IMR-90 (cell line): ENCODE measurements at regions of chr1 and their contacts with region 1.

Region 1: GRCh38 chr1:212455803-212456528 is 23.2 kb downstream of the NENF start:
- DNase-seq: peak; percentile 82
- ATAC-seq: peak; percentile 90
- H3K4me3 ChIP-seq: no peak overlapping the region
- H3K27ac ChIP-seq: no peak overlapping the region
- H3K4me1 ChIP-seq: peaks cover 4% of the 10 kb centered on the region; the same call in 1 of the 2 replicates
- H3K27me3 ChIP-seq: no peaks in the 10 kb centered on the region
- CTCF ChIP-seq: peak; percentile 96
- POLR2A ChIP-seq: no peak
- RAD21 ChIP-seq: peak; percentile 98

Region 2: GRCh38 chr1:211680752-211681327 is 775.1 kb before region 1 on chr1:
- CTCF ChIA-PET with region 1: interaction called, 18 read pairs
- POLR2A ChIA-PET with region 1: no interaction called
- dilution Hi-C with region 1: no loop called
- in situ Hi-C with region 1: loop called (anchors 10 kb)
- intact Hi-C with region 1: loop called (anchors 5 kb)
- DNase-seq: peak; percentile 91
- ATAC-seq: peak; percentile 98
- H3K4me3 ChIP-seq: no peak overlapping the region
- H3K27ac ChIP-seq: no peak overlapping the region
- H3K4me1 ChIP-seq: no peaks in the 10 kb centered on the region
- H3K27me3 ChIP-seq: peaks cover 5% of the 10 kb centered on the region; the same call in 1 of the 2 replicates
- CTCF ChIP-seq: peak; percentile 90
- POLR2A ChIP-seq: no peak
- RAD21 ChIP-seq: peak; percentile 90

Region 3: DNA sequence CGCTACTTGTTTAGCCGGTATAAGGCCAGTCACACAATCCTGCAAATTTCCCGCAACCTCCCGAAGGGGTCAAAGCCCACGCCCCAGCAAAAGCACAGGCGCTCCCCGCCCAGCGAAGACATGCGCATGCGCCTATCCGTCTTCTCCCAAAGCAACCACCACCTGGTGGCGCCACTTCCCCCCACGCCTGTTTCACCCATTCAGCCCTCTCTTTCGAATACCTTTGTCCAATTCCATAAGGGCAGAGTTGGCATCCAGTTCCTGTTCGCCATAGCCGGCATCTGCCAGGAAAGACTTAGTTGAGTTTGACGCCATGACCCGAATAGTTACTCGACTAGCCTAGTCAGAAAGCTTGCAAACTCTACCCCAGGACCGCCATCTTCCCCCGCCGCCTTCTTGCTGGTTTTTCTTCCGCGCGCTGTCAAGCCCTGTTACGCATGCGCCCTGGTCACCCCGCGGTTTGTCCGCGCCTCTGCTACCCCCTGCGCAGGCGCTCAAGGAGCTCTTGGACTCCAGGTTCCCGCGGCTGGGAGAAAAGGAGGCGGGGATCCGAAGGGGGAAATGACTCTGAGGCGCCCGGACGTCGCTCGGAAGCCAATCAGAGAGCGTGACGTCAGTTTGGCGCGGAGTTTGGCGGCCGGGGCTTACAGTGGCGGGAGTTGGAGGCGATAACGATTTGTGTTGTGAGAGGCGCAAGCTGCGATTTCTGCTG is 420.7 kb before region 1 on chr1 and contains the starts of genes DTL and INTS7:
- CTCF ChIA-PET with region 1: interaction called, 18 read pairs
- POLR2A ChIA-PET with region 1: no interaction called
- dilution Hi-C with region 1: no loop called
- in situ Hi-C with region 1: no loop called
- intact Hi-C with region 1: loop called (anchors 1 kb)
- DNase-seq: peak; percentile 99
- ATAC-seq: peak; percentile 87
- H3K4me3 ChIP-seq: peak within 1 kb of the TSS; percentile 77
- H3K27ac ChIP-seq: peak within 1 kb of the TSS; percentile 82
- H3K4me1 ChIP-seq: peaks cover 10% of the 10 kb centered on the region
- H3K27me3 ChIP-seq: no peaks in the 10 kb centered on the region
- CTCF ChIP-seq: peak; percentile 80
- POLR2A ChIP-seq: peak; percentile 82
- RAD21 ChIP-seq: no peak
- total RNA-seq, gene DTL: 16.7 and 19.9 TPM in 2 replicates
- total RNA-seq, gene INTS7: 20.3 and 24.9 TPM in 2 replicates

Region 4: GRCh38 chr1:212070720-212071302 is 385.2 kb before region 1 on chr1:
- CTCF ChIA-PET with region 1: interaction called, 45 read pairs
- POLR2A ChIA-PET with region 1: no interaction called
- dilution Hi-C with region 1: no loop called
- in situ Hi-C with region 1: no loop called
- intact Hi-C with region 1: loop called (anchors 1 kb)
- DNase-seq: peak; percentile 70
- ATAC-seq: peak; percentile 78
- H3K4me3 ChIP-seq: no peak overlapping the region
- H3K27ac ChIP-seq: no peak overlapping the region
- H3K4me1 ChIP-seq: no peaks in the 10 kb centered on the region
- H3K27me3 ChIP-seq: no peaks in the 10 kb centered on the region
- CTCF ChIP-seq: peak; percentile 91
- POLR2A ChIP-seq: peak; percentile 33; the same call in 1 of the 2 replicates
- RAD21 ChIP-seq: peak; percentile 93

Region 5: DNA sequence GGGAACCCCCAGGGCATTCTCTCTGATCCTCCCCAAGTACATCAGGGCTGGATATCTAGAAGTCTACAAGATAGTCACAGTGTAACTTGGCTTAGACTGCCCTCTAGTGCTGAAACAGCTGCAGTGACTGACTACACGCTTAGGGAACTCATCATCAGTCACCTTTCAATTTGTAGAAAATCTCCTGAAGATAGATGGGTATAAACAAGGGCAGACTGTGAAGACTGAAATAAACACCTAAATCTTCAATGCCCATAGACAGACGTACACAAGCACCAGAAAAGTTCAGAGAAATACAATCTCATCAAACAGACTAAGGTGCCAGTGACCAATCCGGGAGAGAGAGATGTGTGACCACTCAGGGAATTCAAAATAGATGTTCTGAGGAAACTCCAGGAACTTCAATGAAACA is 87.9 kb before region 1 on chr1:
- CTCF ChIA-PET with region 1: interaction called, 9 read pairs
- POLR2A ChIA-PET with region 1: no interaction called
- dilution Hi-C with region 1: no loop called
- in situ Hi-C with region 1: no loop called
- intact Hi-C with region 1: loop called (anchors 1 kb)
- DNase-seq: peak; percentile 81
- ATAC-seq: peak; percentile 98
- H3K4me3 ChIP-seq: no peak overlapping the region
- H3K27ac ChIP-seq: no peak overlapping the region
- H3K4me1 ChIP-seq: no peaks in the 10 kb centered on the region
- H3K27me3 ChIP-seq: no peaks in the 10 kb centered on the region
- CTCF ChIP-seq: peak; percentile 88
- POLR2A ChIP-seq: no peak
- RAD21 ChIP-seq: peak; percentile 93

Region 6: DNA sequence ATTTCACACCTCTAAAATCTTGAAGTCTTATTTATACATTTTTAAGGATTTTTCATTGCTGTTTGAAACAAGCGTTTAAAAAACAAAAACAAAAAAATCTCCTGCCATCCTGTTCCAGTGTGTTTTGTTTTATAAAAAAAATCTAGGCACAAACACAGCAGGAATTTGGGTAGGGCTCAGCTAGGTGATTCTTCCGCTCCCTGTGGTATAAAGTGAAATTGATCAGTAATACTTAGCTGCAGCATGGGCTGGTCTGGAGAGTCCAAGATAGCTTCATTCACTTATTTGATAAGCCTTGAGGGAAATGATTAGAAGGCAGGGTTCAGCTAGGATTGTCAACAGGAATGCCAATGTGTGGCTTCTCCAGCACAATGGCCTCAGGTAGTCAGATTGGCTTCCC is 178.3 kb after region 1 on chr1:
- CTCF ChIA-PET with region 1: no interaction called
- POLR2A ChIA-PET with region 1: no interaction called
- dilution Hi-C with region 1: no loop called
- in situ Hi-C with region 1: no loop called
- intact Hi-C with region 1: no loop called
- DNase-seq: no peak
- ATAC-seq: no peak
- H3K4me3 ChIP-seq: no peak overlapping the region
- H3K27ac ChIP-seq: no peak overlapping the region
- H3K4me1 ChIP-seq: peaks cover 31% of the 10 kb centered on the region
- H3K27me3 ChIP-seq: no peaks in the 10 kb centered on the region
- CTCF ChIP-seq: no peak
- POLR2A ChIP-seq: no peak
- RAD21 ChIP-seq: no peak